ENCODE measurements at regions of chr1 and their contacts with region 1.

Region 1: DNA sequence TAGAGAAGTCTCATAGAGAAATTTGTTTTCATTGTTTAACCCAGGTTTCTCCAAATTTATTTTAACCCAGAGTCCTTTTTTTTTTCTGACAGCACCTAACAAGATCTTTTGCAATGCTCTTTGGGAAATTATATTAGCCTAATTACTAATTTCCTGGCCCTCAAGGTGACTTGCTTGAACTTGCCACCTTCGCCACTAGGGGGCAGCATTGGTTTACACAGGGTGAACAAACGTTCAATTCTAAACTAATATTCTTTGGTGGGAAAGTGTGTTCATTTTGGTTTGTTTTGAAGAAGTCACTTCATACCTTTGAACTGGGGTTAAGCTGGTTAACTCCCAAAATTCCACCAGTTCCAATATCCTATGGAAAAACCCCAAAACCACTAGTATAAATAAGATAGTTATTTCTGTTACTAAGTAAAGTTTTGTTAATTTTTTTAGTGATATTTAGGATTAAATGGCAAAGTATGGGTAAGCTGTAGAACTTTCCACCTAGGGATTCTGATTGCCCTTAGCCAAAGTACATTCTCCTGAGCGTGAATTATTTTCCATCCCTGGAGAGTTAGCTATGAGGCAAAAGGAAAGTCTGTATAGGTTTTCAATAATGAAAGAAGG is 13.0 kb downstream of the CCDC190 start:
- DNase-seq: no peak
- ATAC-seq: peak; percentile 78
- H3K4me3 ChIP-seq: no peak overlapping the region
- H3K27ac ChIP-seq: no peak overlapping the region
- H3K4me1 ChIP-seq: no peaks in the 10 kb centered on the region; the same call in 1 of the 2 replicates
- H3K27me3 ChIP-seq: no peaks in the 10 kb centered on the region; the same call in 1 of the 2 replicates
- CTCF ChIP-seq: peak; percentile 88

Region 2: DNA sequence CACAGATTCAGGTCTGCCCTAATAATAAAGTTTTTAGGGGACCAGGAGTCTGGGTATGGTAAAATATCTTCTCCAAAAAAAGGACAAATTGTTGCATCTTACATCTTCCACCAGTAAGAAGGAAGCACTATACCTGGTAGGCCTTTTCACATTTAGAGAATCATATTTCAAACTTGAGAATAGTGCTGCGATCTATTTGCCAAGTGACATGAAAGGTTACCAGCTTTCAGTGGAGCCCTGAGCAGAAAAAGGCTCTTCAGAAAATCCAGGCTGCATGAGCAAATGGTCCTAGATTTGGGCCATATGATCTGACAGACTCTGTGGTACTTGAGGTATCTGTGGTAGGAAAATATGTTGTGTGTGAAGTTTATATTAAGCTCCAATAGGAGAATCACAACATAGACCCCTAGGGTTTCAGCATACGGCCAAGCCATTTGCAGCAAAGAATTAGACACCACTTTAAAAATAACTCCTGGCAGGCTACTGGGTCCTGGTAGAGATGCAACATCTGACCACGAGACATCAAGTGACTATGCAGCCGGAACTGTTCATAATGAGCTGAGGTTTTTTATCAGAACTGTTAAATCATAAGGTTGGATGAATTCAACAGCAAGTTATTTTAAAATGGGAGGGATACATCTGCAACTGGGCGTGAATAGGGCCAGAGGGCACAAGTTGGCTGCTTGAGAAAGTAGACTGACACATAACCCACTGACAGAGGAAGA is 51.6 kb after region 1 on chr1:
- CTCF ChIA-PET with region 1: no interaction called
- POLR2A ChIA-PET with region 1: no interaction called
- in situ Hi-C with region 1: no loop called
- intact Hi-C with region 1: no loop called
- DNase-seq: no peak
- ATAC-seq: no peak
- H3K4me3 ChIP-seq: no peak overlapping the region
- H3K27ac ChIP-seq: no peak overlapping the region
- H3K4me1 ChIP-seq: no peaks in the 10 kb centered on the region
- H3K27me3 ChIP-seq: peaks cover 2% of the 10 kb centered on the region; the same call in 1 of the 2 replicates
- CTCF ChIP-seq: no peak

Region 3: DNA sequence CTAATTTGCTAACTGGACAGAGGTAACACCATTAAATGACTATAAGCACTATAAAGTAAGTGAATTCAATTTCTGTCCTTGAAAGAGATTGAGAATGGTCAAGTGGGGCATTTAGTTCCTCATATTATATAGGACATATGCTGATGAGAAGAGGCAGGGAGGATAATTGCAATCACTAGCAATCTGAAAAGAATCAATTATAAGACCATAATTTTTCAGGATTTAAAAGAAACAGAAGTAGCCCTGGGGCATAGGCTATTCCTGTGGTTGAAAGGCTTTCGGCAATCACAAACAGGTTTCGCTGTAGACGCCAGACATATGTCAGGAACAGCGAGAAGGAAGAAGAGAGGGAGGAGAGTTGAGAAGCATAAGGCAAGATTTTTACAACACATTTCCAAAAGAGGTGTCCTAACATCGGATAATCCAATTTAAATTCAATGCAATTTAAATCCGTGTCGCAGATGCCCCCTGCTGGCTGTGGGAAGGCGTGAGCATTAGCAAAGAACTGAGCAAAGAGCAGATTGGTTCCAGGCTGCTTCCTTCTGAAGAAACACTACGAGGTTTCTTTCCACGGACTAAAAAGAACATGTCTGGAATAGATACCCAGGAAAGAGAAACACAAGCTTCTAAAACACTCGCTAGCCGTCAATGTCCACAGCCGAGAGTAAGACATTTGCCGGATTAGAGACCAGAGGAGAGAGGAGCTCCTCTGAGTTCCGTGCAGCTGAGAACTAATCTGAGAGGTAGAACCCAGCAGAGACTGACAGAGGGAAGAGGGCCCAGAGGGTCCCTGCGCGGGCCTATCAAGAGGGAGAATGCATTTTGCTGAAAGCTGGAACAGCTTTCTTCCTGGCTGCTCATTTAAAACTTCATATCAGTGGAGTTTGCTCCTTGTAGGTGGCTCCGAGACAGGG is 326.8 kb after region 1 on chr1:
- CTCF ChIA-PET with region 1: no interaction called
- POLR2A ChIA-PET with region 1: no interaction called
- in situ Hi-C with region 1: no loop called
- intact Hi-C with region 1: loop called (anchors 2 kb)
- DNase-seq: no peak
- ATAC-seq: peak; percentile 87
- H3K4me3 ChIP-seq: peak overlapping the region in 1 of 2 experiments; percentile 27; a peak in 2 of 4 replicates
- H3K27ac ChIP-seq: no peak overlapping the region
- H3K4me1 ChIP-seq: 0 out of 2 replicates have a peak, but pooled peaks cover 3% of the 10 kb centered on the region
- H3K27me3 ChIP-seq: no peaks in the 10 kb centered on the region
- CTCF ChIP-seq: peak; percentile 93